ENCODE measurements at regions of chr5 and their contacts with region 1.

Region 1: DNA sequence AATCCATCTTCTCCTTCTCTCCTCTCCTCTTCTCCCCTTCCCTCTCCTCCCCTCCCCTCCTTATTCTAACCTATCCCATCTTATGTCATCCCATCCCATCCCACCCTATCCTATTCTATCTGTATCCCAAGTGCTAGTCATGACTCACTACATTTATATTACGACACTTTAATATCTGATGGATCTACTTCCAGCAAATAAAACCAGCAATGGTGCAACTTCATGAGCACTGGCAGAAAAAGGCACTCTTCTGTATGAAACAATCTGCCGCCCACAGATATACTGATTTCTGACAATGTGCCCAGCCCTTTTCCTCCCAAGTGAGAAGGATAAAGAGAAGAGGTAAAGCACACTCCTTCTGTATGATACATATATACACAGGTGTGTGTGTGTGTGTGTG is 86.6 kb upstream of the ANKH start:
- DNase-seq: no peak
- H3K4me3 ChIP-seq: no peak overlapping the region
- H3K27ac ChIP-seq: no peak overlapping the region
- H3K4me1 ChIP-seq: peaks cover 8% of the 10 kb centered on the region; the same call in 1 of the 2 replicates
- H3K27me3 ChIP-seq: peaks cover 4% of the 10 kb centered on the region
- CTCF ChIP-seq: no peak

Region 2: GRCh38 chr5:14615344-14615743 is 342.9 kb before region 1 on chr5:
- CTCF ChIA-PET with region 1: no interaction called
- POLR2A ChIA-PET with region 1: interaction called, 11 read pairs
- intact Hi-C with region 1: no loop called
- DNase-seq: no peak
- H3K4me3 ChIP-seq: no peak overlapping the region
- H3K27ac ChIP-seq: no peak overlapping the region
- H3K4me1 ChIP-seq: no peaks in the 10 kb centered on the region
- H3K27me3 ChIP-seq: no peaks in the 10 kb centered on the region
- CTCF ChIP-seq: no peak

Region 3: DNA sequence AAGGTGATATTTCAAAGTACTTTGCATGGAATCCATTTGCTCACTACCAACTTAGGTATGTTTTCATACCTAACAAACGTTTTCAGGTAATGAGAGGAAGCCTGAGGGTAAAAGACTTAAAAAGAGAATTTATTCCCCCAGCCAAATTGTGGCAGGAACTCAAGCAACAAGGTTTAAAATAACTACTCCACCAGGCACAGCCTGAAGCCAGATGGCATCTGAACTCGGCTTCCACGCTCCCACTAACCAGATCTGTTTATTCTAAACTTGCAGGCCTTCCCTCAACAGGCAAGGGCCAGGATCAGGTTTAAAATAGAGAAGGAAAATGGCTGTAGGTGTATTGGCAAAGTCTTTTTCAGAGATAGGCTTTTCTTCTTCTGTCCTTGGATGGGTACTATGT is 204.3 kb before region 1 on chr5:
- CTCF ChIA-PET with region 1: no interaction called
- POLR2A ChIA-PET with region 1: no interaction called
- intact Hi-C with region 1: no loop called
- DNase-seq: no peak
- H3K4me3 ChIP-seq: no peak overlapping the region
- H3K27ac ChIP-seq: no peak overlapping the region
- H3K4me1 ChIP-seq: no peaks in the 10 kb centered on the region
- H3K27me3 ChIP-seq: peaks cover 8% of the 10 kb centered on the region; the same call in 1 of the 2 replicates
- CTCF ChIP-seq: no peak

Region 4: DNA sequence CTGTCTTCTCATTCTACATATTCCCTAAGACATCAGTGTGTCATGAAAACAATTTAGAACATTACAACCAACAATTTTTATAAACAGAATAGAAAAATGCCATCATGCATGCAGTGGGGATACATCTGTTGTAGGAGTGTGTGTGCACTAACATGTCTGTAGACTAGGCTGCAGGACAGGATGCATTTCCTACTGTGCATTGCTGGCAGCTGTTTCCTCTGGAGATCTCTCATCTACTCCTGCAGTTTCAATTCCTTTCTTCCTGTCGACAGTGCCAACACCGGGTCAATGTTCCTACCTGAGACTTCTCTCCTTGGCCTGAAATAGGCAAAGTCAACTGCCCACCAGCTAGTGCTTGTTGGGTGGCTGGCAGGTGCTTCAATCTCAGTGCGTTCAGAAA is 156.4 kb before region 1 on chr5:
- CTCF ChIA-PET with region 1: no interaction called
- POLR2A ChIA-PET with region 1: no interaction called
- intact Hi-C with region 1: loop called (anchors 5 kb)
- DNase-seq: peak in 1 of 2 experiments; percentile 26
- H3K4me3 ChIP-seq: no peak overlapping the region
- H3K27ac ChIP-seq: no peak overlapping the region
- H3K4me1 ChIP-seq: no peaks in the 10 kb centered on the region
- H3K27me3 ChIP-seq: no peaks in the 10 kb centered on the region; the same call in 1 of the 2 replicates
- CTCF ChIP-seq: no peak

Region 5: DNA sequence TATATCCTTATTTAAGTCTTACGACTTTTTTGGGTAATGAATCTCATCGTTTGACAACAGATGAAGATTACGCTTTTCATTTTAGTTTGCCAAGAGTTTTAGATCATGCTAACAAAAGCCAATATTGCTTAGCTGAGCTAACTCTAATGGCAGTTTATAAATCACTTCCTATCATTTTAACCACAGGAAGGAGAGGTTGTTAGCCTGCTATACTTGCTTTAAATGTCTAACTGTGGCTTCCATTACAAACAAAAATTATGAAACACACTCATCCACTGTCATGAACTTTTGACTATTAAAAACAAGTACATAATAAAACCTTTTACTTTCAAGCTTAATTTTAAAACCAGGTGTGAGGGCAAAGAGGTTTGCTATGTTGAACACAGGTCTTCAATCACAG is 32.9 kb before region 1 on chr5:
- CTCF ChIA-PET with region 1: no interaction called
- POLR2A ChIA-PET with region 1: no interaction called
- intact Hi-C with region 1: no loop called
- DNase-seq: no peak
- H3K4me3 ChIP-seq: no peak overlapping the region
- H3K27ac ChIP-seq: no peak overlapping the region
- H3K4me1 ChIP-seq: no peaks in the 10 kb centered on the region
- H3K27me3 ChIP-seq: no peaks in the 10 kb centered on the region
- CTCF ChIP-seq: no peak

Region 6: DNA sequence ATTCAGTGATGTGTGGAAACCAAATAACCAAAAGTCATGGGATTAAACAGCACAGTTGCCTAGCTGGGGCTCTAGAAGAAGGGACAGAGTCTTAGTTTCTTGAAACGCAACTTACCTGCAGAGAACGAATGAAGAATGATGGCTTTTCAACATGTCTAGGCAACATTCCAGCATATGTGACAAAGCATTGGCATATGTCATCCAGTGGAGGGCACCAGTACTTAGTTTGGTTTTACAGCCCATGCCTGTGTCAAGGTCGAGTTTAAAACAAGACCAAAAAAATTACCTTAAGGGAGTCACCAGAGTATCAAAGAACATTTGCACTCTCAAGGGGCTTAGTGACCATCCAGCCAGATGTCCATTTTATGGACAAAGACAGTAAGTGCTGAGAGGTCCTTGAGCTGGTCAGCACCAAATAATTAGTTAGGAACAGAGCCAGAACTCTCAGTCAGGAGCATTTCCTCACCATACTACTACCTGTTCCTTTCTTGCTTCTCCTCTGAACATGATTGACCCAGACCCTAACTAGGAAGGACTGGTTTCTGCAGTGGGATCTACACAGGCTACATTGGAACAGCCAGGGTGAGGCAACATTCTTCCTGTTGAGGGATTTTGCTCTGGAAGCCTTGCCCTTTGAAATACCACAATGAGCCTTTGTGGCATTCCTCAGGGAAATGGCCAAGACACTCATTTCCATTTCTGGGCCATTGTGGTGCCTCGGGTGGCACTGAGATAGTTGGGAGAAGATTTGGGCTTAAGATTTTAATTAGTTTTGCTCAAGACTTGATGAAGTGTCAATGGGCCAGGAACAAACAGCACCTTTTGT is 11.2 kb before region 1 on chr5:
- CTCF ChIA-PET with region 1: no interaction called
- POLR2A ChIA-PET with region 1: no interaction called
- intact Hi-C with region 1: no loop called
- DNase-seq: peak in 1 of 2 experiments; percentile 24
- H3K4me3 ChIP-seq: no peak overlapping the region
- H3K27ac ChIP-seq: no peak overlapping the region
- H3K4me1 ChIP-seq: no peaks in the 10 kb centered on the region
- H3K27me3 ChIP-seq: peaks cover 16% of the 10 kb centered on the region; the same call in 1 of the 2 replicates
- CTCF ChIP-seq: peak; percentile 49

Measured in PC-9 (cell line).